ENCODE measurements at regions of chr18 and their contacts with region 1.

Region 1: DNA sequence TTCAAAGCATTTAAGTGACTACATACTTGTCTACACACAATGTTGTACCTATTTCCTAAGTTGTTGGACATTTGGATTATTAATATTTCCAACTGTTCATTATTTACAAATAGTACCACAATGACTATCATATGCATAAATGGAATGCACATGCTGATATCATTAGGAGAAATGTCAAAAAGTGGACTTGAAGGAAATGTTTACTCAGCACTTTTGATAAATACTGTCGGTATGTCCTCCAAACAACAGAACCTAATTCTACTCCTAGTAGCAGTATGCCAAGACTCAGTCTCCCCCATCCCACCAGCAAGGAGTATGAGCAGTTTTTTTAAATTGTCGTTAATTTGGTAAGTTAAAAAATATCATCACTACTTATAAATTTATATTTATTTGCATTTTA is 116.8 kb downstream of the L3MBTL4 start:
- DNase-seq: no peak
- H3K4me3 ChIP-seq: no peak overlapping the region
- H3K27ac ChIP-seq: no peak overlapping the region
- H3K4me1 ChIP-seq: no peaks in the 10 kb centered on the region
- H3K27me3 ChIP-seq: no peaks in the 10 kb centered on the region
- CTCF ChIP-seq: no peak

Region 2: GRCh38 chr18:6207116-6207515 is 90.8 kb before region 1 on chr18:
- CTCF ChIA-PET with region 1: no interaction called
- dilution Hi-C with region 1: loop called (anchors 5 kb)
- in situ Hi-C with region 1: no loop called
- intact Hi-C with region 1: no loop called
- DNase-seq: no peak
- H3K4me3 ChIP-seq: no peak overlapping the region
- H3K27ac ChIP-seq: no peak overlapping the region
- H3K4me1 ChIP-seq: no peaks in the 10 kb centered on the region
- H3K27me3 ChIP-seq: no peaks in the 10 kb centered on the region
- CTCF ChIP-seq: no peak

Measured in mammary epithelial cell (primary cell).